ENCODE measurements at regions of chr5 and their contacts with region 1.

Region 1: GRCh38 chr5:16456103-16456832 is 9.3 kb downstream of the ZNF622 start:
- DNase-seq: peak; percentile 61
- ATAC-seq: peak; percentile 88
- H3K4me3 Mint-ChIP-seq: peak overlapping the region; percentile 22
- H3K27ac Mint-ChIP-seq: peak overlapping the region; percentile 90
- H3K4me1 Mint-ChIP-seq: peaks cover 56% of the 10 kb centered on the region
- H3K27me3 Mint-ChIP-seq: no peaks in the 10 kb centered on the region
- CTCF ChIP-seq: peak; percentile 81

Region 2: GRCh38 chr5:16152601-16153568 is 303.4 kb before region 1 on chr5:
- CTCF ChIA-PET with region 1: no interaction called
- POLR2A ChIA-PET with region 1: no interaction called
- intact Hi-C with region 1: loop called (anchors 5 kb)
- DNase-seq: no peak
- ATAC-seq: no peak
- H3K4me3 Mint-ChIP-seq: no peak overlapping the region
- H3K27ac Mint-ChIP-seq: no peak overlapping the region
- H3K4me1 Mint-ChIP-seq: no peaks in the 10 kb centered on the region
- H3K27me3 Mint-ChIP-seq: no peaks in the 10 kb centered on the region
- CTCF ChIP-seq: no peak

Region 3: DNA sequence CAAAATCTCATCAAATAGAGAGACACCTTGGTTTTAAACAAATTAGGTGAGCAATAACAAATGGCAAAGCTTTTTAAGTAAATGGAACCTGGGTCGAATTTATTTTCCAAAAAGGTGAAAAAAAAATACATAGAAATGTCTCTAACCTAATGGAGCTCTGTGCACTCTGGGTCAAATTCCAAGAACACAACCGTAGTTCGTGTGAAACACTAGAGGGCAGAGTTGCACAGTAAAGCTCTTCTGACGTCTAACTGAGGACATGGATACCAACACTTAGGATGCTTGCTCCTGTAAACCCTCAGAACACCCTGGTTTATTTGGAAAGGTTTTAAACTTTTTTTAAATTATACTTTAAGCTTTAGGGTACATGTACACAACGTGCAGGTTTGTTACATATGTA is 295.6 kb before region 1 on chr5:
- CTCF ChIA-PET with region 1: interaction called, 57 read pairs
- POLR2A ChIA-PET with region 1: no interaction called
- intact Hi-C with region 1: loop called (anchors 5 kb)
- DNase-seq: peak; percentile 15
- ATAC-seq: peak; percentile 66
- H3K4me3 Mint-ChIP-seq: no peak overlapping the region
- H3K27ac Mint-ChIP-seq: no peak overlapping the region
- H3K4me1 Mint-ChIP-seq: no peaks in the 10 kb centered on the region
- H3K27me3 Mint-ChIP-seq: peaks cover 3% of the 10 kb centered on the region
- CTCF ChIP-seq: peak; percentile 78

Region 4: GRCh38 chr5:16364910-16365309 is 91.4 kb before region 1 on chr5:
- CTCF ChIA-PET with region 1: no interaction called
- POLR2A ChIA-PET with region 1: no interaction called
- intact Hi-C with region 1: no loop called
- DNase-seq: no peak
- ATAC-seq: no peak
- H3K4me3 Mint-ChIP-seq: no peak overlapping the region
- H3K27ac Mint-ChIP-seq: no peak overlapping the region
- H3K4me1 Mint-ChIP-seq: no peaks in the 10 kb centered on the region
- H3K27me3 Mint-ChIP-seq: peaks cover 6% of the 10 kb centered on the region
- CTCF ChIP-seq: no peak

Region 5: DNA sequence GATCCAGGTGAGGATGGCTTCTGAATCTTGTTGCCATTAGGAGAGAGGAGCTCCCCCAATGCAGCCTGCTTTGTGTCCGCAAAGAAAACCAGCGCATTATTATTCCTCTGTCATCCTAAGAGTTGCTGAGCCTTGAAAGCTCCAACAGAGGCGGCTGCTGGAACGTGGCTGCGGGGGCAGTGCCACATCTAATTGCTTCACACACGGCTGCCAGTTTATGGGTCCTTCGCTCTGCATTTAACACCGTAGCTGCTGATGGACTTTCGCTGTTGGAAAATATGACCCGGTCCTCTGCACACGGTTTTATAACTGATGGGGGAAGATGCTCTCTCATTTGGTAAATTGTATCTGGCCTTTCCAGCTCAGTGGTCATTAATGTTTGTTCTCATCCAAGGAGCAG is 28.7 kb before region 1 on chr5:
- CTCF ChIA-PET with region 1: interaction called, 12 read pairs
- POLR2A ChIA-PET with region 1: no interaction called
- intact Hi-C with region 1: no loop called
- DNase-seq: no peak
- ATAC-seq: no peak
- H3K4me3 Mint-ChIP-seq: no peak overlapping the region
- H3K27ac Mint-ChIP-seq: no peak overlapping the region
- H3K4me1 Mint-ChIP-seq: no peaks in the 10 kb centered on the region
- H3K27me3 Mint-ChIP-seq: peaks cover 8% of the 10 kb centered on the region
- CTCF ChIP-seq: no peak

Region 6: DNA sequence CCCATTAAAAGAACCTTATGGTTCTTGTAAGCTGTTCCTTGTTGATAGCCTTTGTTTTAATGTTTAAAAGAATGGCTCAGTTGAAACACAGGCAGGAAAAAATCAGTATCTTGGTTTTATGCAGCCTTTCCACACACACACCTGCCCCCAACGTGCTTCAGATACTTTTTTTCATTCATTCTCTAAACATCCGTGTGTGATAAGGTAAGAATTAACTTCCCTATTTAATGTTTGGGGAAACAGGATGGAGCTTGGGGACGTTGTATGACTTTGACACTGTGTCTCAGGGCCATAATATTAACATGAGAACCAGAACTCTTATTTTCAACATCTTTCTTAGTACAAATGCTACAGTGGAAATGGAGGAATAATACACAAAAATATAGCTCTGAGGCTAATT is 15.1 kb after region 1 on chr5:
- CTCF ChIA-PET with region 1: interaction called, 46 read pairs
- POLR2A ChIA-PET with region 1: interaction called, 3 read pairs
- intact Hi-C with region 1: no loop called
- DNase-seq: no peak
- ATAC-seq: no peak
- H3K4me3 Mint-ChIP-seq: no peak overlapping the region
- H3K27ac Mint-ChIP-seq: no peak overlapping the region
- H3K4me1 Mint-ChIP-seq: peaks cover 40% of the 10 kb centered on the region
- H3K27me3 Mint-ChIP-seq: no peaks in the 10 kb centered on the region
- CTCF ChIP-seq: no peak

Region 7: GRCh38 chr5:16666883-16667398 is 210.7 kb after region 1 on chr5:
- CTCF ChIA-PET with region 1: interaction called, 15 read pairs
- POLR2A ChIA-PET with region 1: no interaction called
- intact Hi-C with region 1: no loop called
- DNase-seq: peak; percentile 51
- ATAC-seq: peak; percentile 34
- H3K4me3 Mint-ChIP-seq: no peak overlapping the region
- H3K27ac Mint-ChIP-seq: no peak overlapping the region
- H3K4me1 Mint-ChIP-seq: peaks cover 5% of the 10 kb centered on the region
- H3K27me3 Mint-ChIP-seq: no peaks in the 10 kb centered on the region
- CTCF ChIP-seq: peak; percentile 60

Measured in activated CD8-positive, alpha-beta T cell treated with anti-CD3 and anti-CD28 coated beads for 36 hours (primary cell).